Endothelial cell of umbilical vein (primary cell): ENCODE measurements at regions of chr14 and their contacts with region 1.

Region 1: GRCh38 chr14:90805662-90806540 is 10.3 kb downstream of the TTC7B start:
- DNase-seq: no peak
- H3K4me3 ChIP-seq: no peak overlapping the region
- H3K27ac ChIP-seq: peak overlapping the region; percentile 17
- H3K4me1 ChIP-seq: peaks cover 52% of the 10 kb centered on the region
- H3K27me3 ChIP-seq: no peaks in the 10 kb centered on the region
- CTCF ChIP-seq: no peak
- POLR2A ChIP-seq: no peak

Region 2: GRCh38 chr14:90815822-90816700 is 10.2 kb after region 1 on chr14 and contains the start of gene TTC7B:
- CTCF ChIA-PET with region 1: interaction called, 15 read pairs
- POLR2A ChIA-PET with region 1: no interaction called
- dilution Hi-C with region 1: no loop called
- intact Hi-C with region 1: loop called (anchors 1 kb)
- DNase-seq: no peak
- H3K4me3 ChIP-seq: peak within 1 kb of the TSS; percentile 70 to 95 (median 94)
- H3K27ac ChIP-seq: peak within 1 kb of the TSS; percentile 41
- H3K4me1 ChIP-seq: peaks cover 9% of the 10 kb centered on the region
- H3K27me3 ChIP-seq: no peaks in the 10 kb centered on the region
- CTCF ChIP-seq: peak in 1 of 2 donors; percentile 47
- POLR2A ChIP-seq: no peak
- total RNA-seq, gene TTC7B: 76.5 and 86.4 TPM in 2 replicates

Region 3: GRCh38 chr14:90827916-90828610 is 22.2 kb after region 1 on chr14:
- CTCF ChIA-PET with region 1: interaction called, 3 read pairs
- POLR2A ChIA-PET with region 1: no interaction called
- dilution Hi-C with region 1: no loop called
- intact Hi-C with region 1: loop called (anchors 1 kb)
- DNase-seq: peak; percentile 93
- H3K4me3 ChIP-seq: peak overlapping the region; percentile 14 to 54 (median 15)
- H3K27ac ChIP-seq: peak overlapping the region; percentile 39
- H3K4me1 ChIP-seq: peaks cover 10% of the 10 kb centered on the region
- H3K27me3 ChIP-seq: no peaks in the 10 kb centered on the region
- CTCF ChIP-seq: no peak
- POLR2A ChIP-seq: peak; percentile 71

Region 4: DNA sequence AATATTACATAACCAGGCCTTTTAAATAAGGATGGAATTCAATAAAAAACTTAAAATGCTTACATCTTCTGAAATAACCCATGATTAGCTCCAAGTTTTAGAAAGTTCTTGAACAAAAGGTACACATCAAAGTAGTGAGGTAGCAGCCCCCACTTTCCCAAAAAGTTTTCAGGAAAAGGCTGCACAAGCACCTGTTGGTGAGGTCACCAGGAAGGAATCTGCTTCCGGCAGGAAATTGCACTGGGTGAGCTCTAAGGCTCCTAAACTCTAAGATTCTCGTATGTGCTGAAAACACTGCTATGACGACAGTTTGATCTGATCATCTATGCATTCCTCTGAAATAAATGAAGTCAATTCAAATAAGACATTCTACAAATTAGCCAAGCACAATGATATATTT is 44.6 kb after region 1 on chr14:
- CTCF ChIA-PET with region 1: no interaction called
- POLR2A ChIA-PET with region 1: interaction called, 5 read pairs
- dilution Hi-C with region 1: no loop called
- intact Hi-C with region 1: loop called (anchors 1 kb)
- DNase-seq: peak; percentile 82
- H3K4me3 ChIP-seq: no peak overlapping the region
- H3K27ac ChIP-seq: peak overlapping the region; percentile 91
- H3K4me1 ChIP-seq: peaks cover 20% of the 10 kb centered on the region
- H3K27me3 ChIP-seq: no peaks in the 10 kb centered on the region
- CTCF ChIP-seq: no peak
- POLR2A ChIP-seq: no peak